T-cell (primary cell): ENCODE measurements at regions of chr11 and their contacts with region 1.

Region 1: DNA sequence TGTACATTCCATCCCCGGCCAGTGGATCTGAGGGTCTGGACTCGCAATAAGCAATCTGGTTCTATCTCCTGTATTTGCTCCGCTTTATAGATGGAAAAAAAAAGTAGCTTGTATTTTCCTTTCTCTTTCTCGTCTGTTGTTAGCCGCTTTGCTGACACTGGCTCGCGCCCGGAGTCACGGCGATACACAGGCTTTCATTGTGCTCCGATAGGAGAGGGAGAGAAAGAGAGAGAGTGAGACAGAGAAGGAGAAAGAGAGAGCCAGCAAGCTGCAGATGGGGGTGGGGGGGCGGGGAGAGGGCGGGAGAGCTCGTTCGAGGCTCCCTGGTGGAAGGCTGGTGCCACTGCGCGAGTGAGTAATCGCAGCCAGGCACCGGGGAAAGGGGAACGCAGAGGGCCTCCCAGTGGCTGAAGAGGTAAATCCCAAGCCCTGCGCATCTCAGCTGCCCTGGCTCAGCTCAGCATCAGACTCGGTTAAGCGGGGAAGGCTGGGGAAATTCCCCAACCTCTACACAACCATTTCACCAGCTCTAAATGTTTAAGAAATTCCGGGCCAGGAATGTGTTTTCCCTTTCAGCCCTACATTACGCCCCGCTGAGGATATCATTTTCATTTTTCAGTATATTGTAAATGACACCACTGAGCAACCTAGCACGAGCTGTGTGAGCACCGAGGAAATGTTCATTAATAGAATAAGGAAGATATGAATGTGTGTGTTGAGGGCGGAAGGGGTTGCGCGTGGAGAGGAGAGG is at the start of gene MAML2:
- DNase-seq: peak; percentile 67 to 95 (median 89)
- ATAC-seq: peak; percentile 82 to 90 (median 85)
- H3K4me3 ChIP-seq: peak within 1 kb of the TSS; percentile 69 to 97
- H3K4me3 Mint-ChIP-seq: peak within 1 kb of the TSS; percentile 87 to 98 (median 98)
- H3K27ac ChIP-seq: peak within 1 kb of the TSS; percentile 61
- H3K27ac Mint-ChIP-seq: peak within 1 kb of the TSS; percentile 93 to 98
- H3K4me1 ChIP-seq: peaks cover 11 to 36% of the 10 kb centered on the region in 2 experiments
- H3K4me1 Mint-ChIP-seq: peaks cover 23 to 46% (median 36%) of the 10 kb centered on the region in 3 donors
- H3K27me3 ChIP-seq: no peaks in the 10 kb centered on the region
- H3K27me3 Mint-ChIP-seq: no peaks in the 10 kb centered on the region
- total RNA-seq, gene MAML2: 30.4 to 66.7 (median 35.1) TPM

Region 2: GRCh38 chr11:95835768-95836488 is 507.2 kb before region 1 on chr11:
- CTCF ChIA-PET with region 1: interaction called in 1 of 2 experiments, 34 read pairs
- POLR2A ChIA-PET with region 1: interaction called in 1 of 2 experiments, 3 read pairs
- DNase-seq: peak; percentile 9 to 70 (median 46)
- ATAC-seq: peak; percentile 82 to 88 (median 86)
- H3K4me3 ChIP-seq: no peak overlapping the region
- H3K4me3 Mint-ChIP-seq: no peak overlapping the region
- H3K27ac ChIP-seq: no peak overlapping the region
- H3K27ac Mint-ChIP-seq: no peak overlapping the region
- H3K4me1 ChIP-seq: no peaks in the 10 kb centered on the region
- H3K4me1 Mint-ChIP-seq: no peaks in the 10 kb centered on the region
- H3K27me3 ChIP-seq: no peaks in the 10 kb centered on the region
- H3K27me3 Mint-ChIP-seq: no peaks in the 10 kb centered on the region

Region 3: GRCh38 chr11:96062134-96062533 is 281.0 kb before region 1 on chr11:
- CTCF ChIA-PET with region 1: interaction called, 3 to 145 read pairs
- POLR2A ChIA-PET with region 1: interaction called in 1 of 2 experiments, 4 read pairs
- DNase-seq: peak in 21 of 35 experiments; percentile 7 to 49 (median 16)
- ATAC-seq: peak; percentile 84 to 98 (median 94)
- H3K4me3 ChIP-seq: no peak overlapping the region
- H3K4me3 Mint-ChIP-seq: no peak overlapping the region
- H3K27ac ChIP-seq: no peak overlapping the region
- H3K27ac Mint-ChIP-seq: peak overlapping the region; percentile 59 to 71
- H3K4me1 ChIP-seq: peaks cover 4 to 15% of the 10 kb centered on the region in 2 experiments
- H3K4me1 Mint-ChIP-seq: peaks cover 67 to 76% (median 70%) of the 10 kb centered on the region in 3 donors
- H3K27me3 ChIP-seq: no peaks in the 10 kb centered on the region
- H3K27me3 Mint-ChIP-seq: no peaks in the 10 kb centered on the region

Region 4: DNA sequence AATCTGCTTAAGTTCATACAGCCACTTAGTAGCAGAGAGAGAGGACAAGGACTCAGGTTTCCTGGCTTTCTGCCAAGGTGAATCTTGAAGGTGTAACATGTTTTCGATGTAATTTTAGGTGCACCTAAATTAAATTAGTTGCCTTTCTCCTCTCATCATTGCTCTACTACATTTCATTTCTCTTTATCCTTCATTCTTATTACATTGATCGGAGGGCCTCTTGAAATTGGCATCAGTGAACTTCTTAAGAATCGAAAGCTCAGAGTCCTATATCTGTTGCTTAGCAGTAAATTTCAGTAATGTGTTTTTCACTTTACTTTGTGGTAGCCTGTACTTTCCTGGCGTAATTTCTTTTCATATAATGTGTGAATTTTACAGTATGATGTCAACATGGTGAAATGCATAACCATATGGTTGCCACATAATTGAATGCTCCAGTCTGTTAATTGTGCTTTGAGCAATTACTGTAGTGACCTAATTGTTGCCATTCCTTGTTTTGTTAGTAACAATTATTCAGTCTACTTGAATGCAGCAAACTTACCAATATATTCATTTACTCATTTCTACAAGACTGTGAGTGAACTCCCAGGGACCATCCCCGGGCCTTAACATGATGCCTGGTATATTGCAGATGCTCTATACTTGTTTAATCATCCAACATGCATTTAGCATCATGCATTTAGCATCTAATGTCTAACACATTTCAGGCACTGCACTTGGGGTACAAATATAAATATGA is 138.2 kb before region 1 on chr11:
- CTCF ChIA-PET with region 1: interaction called, 3 to 14 read pairs
- POLR2A ChIA-PET with region 1: interaction called, 3 read pairs
- DNase-seq: peak in 18 of 35 experiments; percentile 5 to 78 (median 34)
- ATAC-seq: peak; percentile 18 to 58 (median 22)
- H3K4me3 ChIP-seq: no peak overlapping the region
- H3K4me3 Mint-ChIP-seq: peak overlapping the region; percentile 40 to 73 (median 54)
- H3K27ac ChIP-seq: peak overlapping the region; percentile 79
- H3K27ac Mint-ChIP-seq: peak overlapping the region; percentile 91 to 98
- H3K4me1 ChIP-seq: peaks cover 40 to 65% of the 10 kb centered on the region in 2 experiments
- H3K4me1 Mint-ChIP-seq: peaks cover 85 to 88% (median 87%) of the 10 kb centered on the region in 3 donors
- H3K27me3 ChIP-seq: no peaks in the 10 kb centered on the region
- H3K27me3 Mint-ChIP-seq: no peaks in the 10 kb centered on the region

Region 5: DNA sequence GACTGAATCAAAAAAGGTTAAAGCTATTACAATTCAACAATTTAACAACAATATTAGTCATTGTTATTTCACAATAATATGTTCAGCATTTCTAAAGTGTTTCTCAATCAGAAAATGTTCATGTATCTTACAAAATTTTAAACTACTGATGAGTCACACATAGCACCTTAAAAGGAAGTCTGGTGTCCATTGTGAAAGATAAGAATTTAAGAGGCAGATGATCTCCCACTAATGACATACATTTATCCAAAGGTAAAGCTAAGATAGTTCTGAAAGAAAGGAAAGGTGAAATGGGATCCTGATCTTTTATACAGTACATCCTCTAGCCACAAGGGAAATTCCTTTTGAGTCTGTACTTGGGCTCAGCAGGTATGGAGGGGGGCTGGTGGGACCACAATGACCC is 79.8 kb before region 1 on chr11:
- CTCF ChIA-PET with region 1: interaction called in 1 of 2 experiments, 13 read pairs
- POLR2A ChIA-PET with region 1: interaction called in 1 of 2 experiments, 4 read pairs
- DNase-seq: no peak
- ATAC-seq: no peak
- H3K4me3 ChIP-seq: no peak overlapping the region
- H3K4me3 Mint-ChIP-seq: no peak overlapping the region
- H3K27ac ChIP-seq: no peak overlapping the region
- H3K27ac Mint-ChIP-seq: peak overlapping the region; percentile 81 to 96
- H3K4me1 ChIP-seq: peaks cover 47 to 52% of the 10 kb centered on the region in 2 experiments
- H3K4me1 Mint-ChIP-seq: peaks cover 92 to 95% (median 94%) of the 10 kb centered on the region in 3 donors
- H3K27me3 ChIP-seq: no peaks in the 10 kb centered on the region
- H3K27me3 Mint-ChIP-seq: no peaks in the 10 kb centered on the region

Region 6: DNA sequence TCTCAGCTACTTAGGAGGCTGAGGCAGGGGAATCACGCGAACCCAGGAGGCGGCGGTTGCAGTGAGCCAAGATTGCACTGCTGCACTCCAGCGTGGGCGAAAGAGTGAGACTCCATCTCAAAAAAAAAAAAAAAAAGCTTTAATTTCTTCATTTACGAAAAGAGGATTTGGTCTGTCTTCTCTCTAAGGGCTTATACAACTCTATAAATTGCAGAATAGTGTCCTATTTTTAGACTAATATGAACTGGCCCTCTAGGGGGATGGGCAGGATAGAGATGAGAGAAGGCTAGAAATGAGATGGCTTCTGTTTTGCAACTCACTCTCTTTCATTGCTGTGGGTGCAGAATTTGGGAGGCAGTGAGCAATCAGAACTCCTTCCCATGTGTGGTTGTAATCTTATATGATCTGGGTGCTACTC is 11.4 kb before region 1 on chr11:
- CTCF ChIA-PET with region 1: interaction called, 4 to 22 read pairs
- POLR2A ChIA-PET with region 1: interaction called, 3 to 6 read pairs
- DNase-seq: no peak
- ATAC-seq: peak in 1 of 4 experiments; percentile 19
- H3K4me3 ChIP-seq: no peak overlapping the region
- H3K4me3 Mint-ChIP-seq: peak overlapping the region in 1 of 3 donors; percentile 34
- H3K27ac ChIP-seq: no peak overlapping the region
- H3K27ac Mint-ChIP-seq: peak overlapping the region in 1 of 2 donors; percentile 18
- H3K4me1 ChIP-seq: peaks cover 21 to 45% of the 10 kb centered on the region in 2 experiments
- H3K4me1 Mint-ChIP-seq: peaks cover 83 to 93% (median 85%) of the 10 kb centered on the region in 3 donors
- H3K27me3 ChIP-seq: no peaks in the 10 kb centered on the region
- H3K27me3 Mint-ChIP-seq: no peaks in the 10 kb centered on the region